ENCODE measurements at regions of chr9 and their contacts with region 1.

Region 1: DNA sequence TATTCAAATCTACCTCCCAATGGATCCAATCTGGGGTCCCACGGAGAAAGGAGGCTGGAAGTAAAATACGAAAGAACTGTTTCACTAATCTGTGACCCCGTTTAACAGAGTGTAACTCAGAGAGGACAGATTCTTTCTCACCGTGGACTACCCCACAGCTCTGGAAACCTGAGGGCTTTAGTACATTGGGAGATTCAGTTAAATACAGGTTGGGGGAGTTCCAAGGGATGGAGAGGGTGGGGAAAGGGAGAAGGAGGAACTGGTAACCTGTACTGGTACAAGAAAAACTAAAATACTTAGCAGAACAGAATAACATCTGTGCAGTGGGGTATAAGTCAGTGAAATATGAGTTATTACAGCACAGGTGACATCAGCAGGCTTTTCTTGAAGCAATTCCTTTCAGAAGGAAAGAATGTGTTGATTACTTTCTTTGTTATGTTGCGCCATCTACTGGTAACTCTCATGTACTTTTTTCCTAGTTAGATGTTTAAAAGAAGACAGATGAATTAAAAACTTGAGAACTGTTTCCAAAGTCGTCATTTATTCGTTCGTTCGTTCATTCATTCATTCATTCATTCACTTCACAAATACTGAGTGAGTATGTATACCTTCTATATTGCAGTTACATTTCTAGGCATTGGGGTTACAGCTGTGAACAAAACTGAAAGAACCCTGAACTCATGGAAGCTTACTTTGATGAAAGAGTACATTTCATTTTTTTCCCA is 30.0 kb upstream of the STOM start:
- DNase-seq: peak; percentile 69
- ATAC-seq: peak; percentile 35
- H3K4me3 ChIP-seq: no peak overlapping the region
- H3K27ac ChIP-seq: no peak overlapping the region
- H3K4me1 ChIP-seq: no peaks in the 10 kb centered on the region
- H3K27me3 ChIP-seq: no peaks in the 10 kb centered on the region; a peak in 1 of 5 replicates
- CTCF ChIP-seq: peak; percentile 74
- EP300 ChIP-seq: no peak
- POLR2A ChIP-seq: no peak
- RAD21 ChIP-seq: peak; percentile 77

Region 2: GRCh38 chr9:121213136-121213806 is 186.8 kb before region 1 on chr9:
- CTCF ChIA-PET with region 1: interaction called, 21 read pairs
- POLR2A ChIA-PET with region 1: no interaction called
- in situ Hi-C with region 1: no loop called
- intact Hi-C with region 1: loop called (anchors 1 kb)
- DNase-seq: peak; percentile 77
- ATAC-seq: peak; percentile 96
- H3K4me3 ChIP-seq: peak overlapping the region in 1 of 3 experiments; percentile 18; a peak in 1 of 6 replicates
- H3K27ac ChIP-seq: no peak overlapping the region
- H3K4me1 ChIP-seq: peaks cover 8% of the 10 kb centered on the region
- H3K27me3 ChIP-seq: no peaks in the 10 kb centered on the region
- CTCF ChIP-seq: peak; percentile 96
- EP300 ChIP-seq: no peak
- POLR2A ChIP-seq: no peak
- RAD21 ChIP-seq: peak; percentile 94

Region 3: GRCh38 chr9:121222524-121223171 is 177.4 kb before region 1 on chr9:
- CTCF ChIA-PET with region 1: interaction called, 6 read pairs
- POLR2A ChIA-PET with region 1: no interaction called
- in situ Hi-C with region 1: loop called (anchors 5 kb)
- intact Hi-C with region 1: no loop called
- DNase-seq: peak; percentile 49
- ATAC-seq: peak; percentile 50; the same call in 2 of the 3 replicates
- H3K4me3 ChIP-seq: no peak overlapping the region
- H3K27ac ChIP-seq: no peak overlapping the region
- H3K4me1 ChIP-seq: peaks cover 11% of the 10 kb centered on the region
- H3K27me3 ChIP-seq: no peaks in the 10 kb centered on the region; a peak in 1 of 5 replicates
- CTCF ChIP-seq: peak; percentile 66
- EP300 ChIP-seq: no peak
- POLR2A ChIP-seq: no peak
- RAD21 ChIP-seq: no peak

Region 4: DNA sequence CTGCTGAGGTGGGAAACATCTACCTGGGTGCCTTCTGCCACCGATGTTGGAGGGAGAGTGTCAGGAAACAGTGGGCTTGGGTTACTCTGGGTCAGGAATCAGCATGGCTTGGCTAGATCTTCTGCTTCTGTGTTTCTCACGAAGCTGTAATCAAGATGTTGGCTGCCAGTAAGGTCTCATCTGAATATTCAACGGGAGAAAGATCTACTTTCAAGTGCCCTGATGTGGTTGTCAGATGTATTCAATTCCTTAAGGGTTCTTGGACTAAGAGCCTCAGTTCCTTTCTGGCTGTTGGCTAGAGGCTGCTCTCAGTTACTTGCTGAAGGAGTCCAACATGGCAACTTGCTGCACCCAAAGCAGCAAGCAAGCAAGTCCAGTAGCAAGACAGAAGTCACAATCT is 11.9 kb after region 1 on chr9:
- CTCF ChIA-PET with region 1: no interaction called
- POLR2A ChIA-PET with region 1: no interaction called
- in situ Hi-C with region 1: no loop called
- intact Hi-C with region 1: no loop called
- DNase-seq: no peak
- ATAC-seq: no peak
- H3K4me3 ChIP-seq: no peak overlapping the region
- H3K27ac ChIP-seq: no peak overlapping the region
- H3K4me1 ChIP-seq: no peaks in the 10 kb centered on the region
- H3K27me3 ChIP-seq: peaks cover 0 to 7% of the 10 kb centered on the region in 2 experiments; a peak in 1 of 5 replicates
- CTCF ChIP-seq: no peak
- EP300 ChIP-seq: no peak
- POLR2A ChIP-seq: no peak
- RAD21 ChIP-seq: no peak